Naive thymus-derived CD4-positive, alpha-beta T cell (primary cell): ENCODE measurements at regions of chr11 and their contacts with region 1.

Region 1: GRCh38 chr11:3880724-3881123 is 25.3 kb downstream of the STIM1 start:
- DNase-seq: no peak
- ATAC-seq: peak; percentile 38
- H3K4me3 ChIP-seq: no peak overlapping the region
- H3K4me3 Mint-ChIP-seq: peak overlapping the region in 9 of 10 donors; percentile 4 to 63 (median 41)
- H3K27ac ChIP-seq: peak overlapping the region; percentile 17
- H3K27ac Mint-ChIP-seq: peak overlapping the region; percentile 1 to 87 (median 68)
- H3K4me1 ChIP-seq: peaks cover 32 to 39% of the 10 kb centered on the region in 2 donors
- H3K4me1 Mint-ChIP-seq: peaks cover 59 to 90% (median 85%) of the 10 kb centered on the region in 7 donors
- H3K27me3 ChIP-seq: no peaks in the 10 kb centered on the region
- H3K27me3 Mint-ChIP-seq: no peaks in the 10 kb centered on the region

Region 2: GRCh38 chr11:2173150-2173693 is 1707.5 kb before region 1 on chr11:
- CTCF ChIA-PET with region 1: no interaction called
- POLR2A ChIA-PET with region 1: no interaction called
- intact Hi-C with region 1: no loop called
- DNase-seq: no peak
- ATAC-seq: no peak
- H3K4me3 ChIP-seq: no peak overlapping the region
- H3K4me3 Mint-ChIP-seq: no peak overlapping the region
- H3K27ac ChIP-seq: no peak overlapping the region
- H3K27ac Mint-ChIP-seq: no peak overlapping the region
- H3K4me1 ChIP-seq: no peaks in the 10 kb centered on the region
- H3K4me1 Mint-ChIP-seq: no peaks in the 10 kb centered on the region
- H3K27me3 ChIP-seq: no peaks in the 10 kb centered on the region
- H3K27me3 Mint-ChIP-seq: no peaks in the 10 kb centered on the region

Region 3: DNA sequence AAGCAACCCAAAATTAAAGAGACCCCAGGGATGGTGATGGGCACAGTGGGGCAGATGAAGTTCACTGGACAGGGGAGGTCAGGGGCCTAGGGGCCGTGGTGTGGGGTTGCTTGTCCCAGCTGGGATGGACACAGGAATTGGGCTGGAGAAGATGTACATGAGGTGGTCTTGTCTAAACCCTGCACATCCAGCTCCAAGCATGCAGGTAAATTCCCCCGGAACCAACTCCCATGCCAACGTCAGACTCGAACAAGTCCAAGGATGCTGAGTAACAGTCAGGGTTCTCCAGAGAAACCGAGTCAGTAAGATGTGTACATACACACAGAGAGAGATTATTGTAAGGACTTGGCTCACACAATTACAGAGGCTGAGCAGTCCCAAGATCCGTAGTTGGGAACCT is 1550.0 kb before region 1 on chr11:
- CTCF ChIA-PET with region 1: no interaction called
- POLR2A ChIA-PET with region 1: no interaction called
- intact Hi-C with region 1: no loop called
- DNase-seq: no peak
- ATAC-seq: no peak
- H3K4me3 ChIP-seq: no peak overlapping the region
- H3K4me3 Mint-ChIP-seq: no peak overlapping the region
- H3K27ac ChIP-seq: no peak overlapping the region
- H3K27ac Mint-ChIP-seq: no peak overlapping the region
- H3K4me1 ChIP-seq: no peaks in the 10 kb centered on the region
- H3K4me1 Mint-ChIP-seq: no peaks in the 10 kb centered on the region
- H3K27me3 ChIP-seq: no peaks in the 10 kb centered on the region
- H3K27me3 Mint-ChIP-seq: peaks cover 0 to 35% (median 13%) of the 10 kb centered on the region in 5 donors

Region 4: DNA sequence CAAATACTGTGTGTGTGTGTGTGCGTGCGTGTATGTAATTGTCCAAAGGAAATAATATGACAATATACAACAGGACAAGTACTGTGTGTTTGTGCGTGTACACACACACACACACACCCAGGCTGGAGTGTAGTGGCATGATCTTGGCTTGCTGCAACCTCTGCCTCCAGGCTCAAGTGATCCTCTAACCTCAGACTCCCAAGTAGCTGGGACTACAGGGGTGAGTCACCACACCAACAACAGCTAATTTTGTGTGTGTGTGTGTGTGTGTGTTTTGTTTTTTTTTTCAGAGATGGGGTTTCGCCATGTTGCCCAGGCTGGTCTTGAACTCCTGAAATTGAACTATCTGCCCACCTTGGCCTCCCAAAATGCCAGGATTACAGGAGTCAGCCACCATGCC is 144.9 kb before region 1 on chr11:
- CTCF ChIA-PET with region 1: no interaction called
- POLR2A ChIA-PET with region 1: no interaction called
- intact Hi-C with region 1: no loop called
- DNase-seq: no peak
- ATAC-seq: no peak
- H3K4me3 ChIP-seq: no peak overlapping the region
- H3K4me3 Mint-ChIP-seq: no peak overlapping the region
- H3K27ac ChIP-seq: no peak overlapping the region
- H3K27ac Mint-ChIP-seq: peak overlapping the region in 2 of 9 donors; percentile 8 to 59
- H3K4me1 ChIP-seq: no peaks in the 10 kb centered on the region
- H3K4me1 Mint-ChIP-seq: peaks cover 2 to 23% (median 16%) of the 10 kb centered on the region in 7 donors
- H3K27me3 ChIP-seq: no peaks in the 10 kb centered on the region
- H3K27me3 Mint-ChIP-seq: no peaks in the 10 kb centered on the region

Region 5: DNA sequence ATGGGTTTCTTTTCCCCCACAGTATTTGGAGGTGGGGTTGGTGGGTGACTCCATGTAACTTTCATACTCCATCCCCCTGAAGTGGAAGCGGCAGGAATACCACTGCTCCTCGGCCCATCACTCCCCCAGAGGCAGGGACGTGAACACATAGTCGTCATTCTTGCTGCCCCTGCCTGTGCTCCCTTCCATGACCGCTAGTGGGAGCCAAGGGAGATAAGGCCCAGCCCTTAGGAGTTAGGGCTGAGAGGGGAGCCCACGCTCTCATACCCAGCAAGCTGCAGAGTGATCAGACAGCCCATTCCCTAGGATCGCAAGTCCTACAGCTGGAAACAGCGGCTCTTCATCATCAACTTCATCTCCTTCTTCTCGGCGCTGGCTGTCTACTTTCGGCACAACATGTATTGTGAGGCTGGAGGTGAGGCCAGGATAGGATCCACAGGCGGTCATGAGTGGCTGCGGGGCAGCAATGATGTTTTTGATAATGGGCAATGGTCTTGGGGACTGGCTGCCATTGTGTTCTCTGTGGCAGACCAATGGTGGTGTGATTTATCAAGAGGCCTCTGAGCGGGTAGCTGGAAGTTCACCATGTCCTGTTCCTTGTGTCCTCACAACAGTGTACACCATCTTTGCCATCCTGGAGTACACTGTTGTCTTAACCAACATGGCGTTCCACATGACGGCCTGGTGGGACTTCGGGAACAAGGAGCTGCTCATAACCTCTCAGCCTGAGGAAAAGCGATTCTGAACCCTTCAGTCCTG is 55.8 kb before region 1 on chr11:
- CTCF ChIA-PET with region 1: interaction called, 3 read pairs
- POLR2A ChIA-PET with region 1: no interaction called
- intact Hi-C with region 1: loop called in 1 of 2 experiments (anchors 1 kb)
- DNase-seq: peak; percentile 65 to 83 (median 77)
- ATAC-seq: peak; percentile 97
- H3K4me3 ChIP-seq: no peak overlapping the region
- H3K4me3 Mint-ChIP-seq: no peak overlapping the region
- H3K27ac ChIP-seq: peak overlapping the region; percentile 38
- H3K27ac Mint-ChIP-seq: peak overlapping the region; percentile 60 to 96 (median 87)
- H3K4me1 ChIP-seq: peaks cover 13 to 14% of the 10 kb centered on the region in 2 donors
- H3K4me1 Mint-ChIP-seq: peaks cover 15 to 46% (median 44%) of the 10 kb centered on the region in 7 donors
- H3K27me3 ChIP-seq: no peaks in the 10 kb centered on the region
- H3K27me3 Mint-ChIP-seq: no peaks in the 10 kb centered on the region

Region 6: GRCh38 chr11:3849297-3849874 is 31.3 kb before region 1 on chr11:
- CTCF ChIA-PET with region 1: interaction called, 13 read pairs
- POLR2A ChIA-PET with region 1: interaction called, 9 read pairs
- intact Hi-C with region 1: loop called in 1 of 2 experiments (anchors 1 kb)
- DNase-seq: peak in 7 of 9 donors; percentile 45 to 72 (median 62)
- ATAC-seq: peak; percentile 82
- H3K4me3 ChIP-seq: no peak overlapping the region
- H3K4me3 Mint-ChIP-seq: no peak overlapping the region
- H3K27ac ChIP-seq: no peak overlapping the region
- H3K27ac Mint-ChIP-seq: peak overlapping the region in 8 of 9 donors; percentile 7 to 80 (median 62)
- H3K4me1 ChIP-seq: peaks cover 20 to 33% of the 10 kb centered on the region in 2 donors
- H3K4me1 Mint-ChIP-seq: peaks cover 28 to 61% (median 42%) of the 10 kb centered on the region in 7 donors
- H3K27me3 ChIP-seq: no peaks in the 10 kb centered on the region
- H3K27me3 Mint-ChIP-seq: no peaks in the 10 kb centered on the region

Region 7: GRCh38 chr11:3861683-3862082 is 19.0 kb before region 1 on chr11:
- CTCF ChIA-PET with region 1: interaction called, 4 read pairs
- POLR2A ChIA-PET with region 1: interaction called, 8 read pairs
- intact Hi-C with region 1: loop called (anchors 2 kb)
- DNase-seq: no peak
- ATAC-seq: no peak
- H3K4me3 ChIP-seq: peak overlapping the region; percentile 32
- H3K4me3 Mint-ChIP-seq: peak overlapping the region; percentile 79 to 98 (median 87)
- H3K27ac ChIP-seq: peak overlapping the region; percentile 22
- H3K27ac Mint-ChIP-seq: peak overlapping the region; percentile 62 to 88 (median 87)
- H3K4me1 ChIP-seq: peaks cover 70 to 78% of the 10 kb centered on the region in 2 donors
- H3K4me1 Mint-ChIP-seq: peaks cover 78 to 95% (median 88%) of the 10 kb centered on the region in 7 donors
- H3K27me3 ChIP-seq: no peaks in the 10 kb centered on the region
- H3K27me3 Mint-ChIP-seq: no peaks in the 10 kb centered on the region

Region 8: DNA sequence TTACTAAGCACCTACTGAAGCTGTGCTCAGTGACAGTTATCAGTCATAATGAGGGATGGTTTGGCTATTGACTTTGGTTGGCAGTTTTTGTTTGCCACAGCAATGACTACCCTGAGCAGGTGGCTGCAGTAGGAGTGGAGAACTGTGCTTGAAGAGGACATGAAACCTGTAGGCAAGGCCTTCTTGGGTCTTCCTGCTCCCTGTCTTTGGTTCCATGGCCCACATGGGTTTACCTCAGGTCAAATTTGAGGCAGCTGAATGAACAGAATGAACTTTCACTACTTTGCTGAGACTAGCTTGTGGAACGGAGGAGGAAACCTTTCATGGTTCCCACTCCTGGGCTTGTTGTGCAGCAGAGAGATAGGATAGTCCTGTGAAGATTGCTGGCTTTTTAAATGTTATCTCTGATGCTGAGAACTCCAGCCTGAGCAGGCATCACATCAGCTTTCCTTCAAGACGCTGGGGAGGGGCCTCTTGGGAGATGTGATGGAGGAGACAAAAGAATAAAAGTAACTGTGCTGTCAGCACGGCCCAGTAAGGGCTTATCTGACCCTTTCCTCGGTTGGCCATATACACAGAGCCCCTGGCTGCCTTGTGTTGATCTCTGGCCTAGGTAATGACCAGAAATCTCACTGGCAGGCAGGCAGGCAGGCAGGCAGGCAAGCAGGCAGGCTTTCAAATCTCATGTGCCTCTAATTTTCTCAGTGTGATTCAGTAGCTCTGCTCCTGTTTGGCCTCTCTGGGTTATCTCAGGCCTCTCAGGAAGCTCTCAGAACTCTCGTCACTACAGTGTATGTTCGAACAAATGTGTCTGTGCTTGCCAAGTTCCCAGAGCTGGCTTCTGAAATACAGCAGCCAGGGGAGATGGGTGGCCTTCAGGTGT is 13.3 kb before region 1 on chr11:
- CTCF ChIA-PET with region 1: interaction called, 7 read pairs
- POLR2A ChIA-PET with region 1: interaction called, 5 read pairs
- intact Hi-C with region 1: loop called in 1 of 2 experiments (anchors 1 kb)
- DNase-seq: peak in 1 of 9 donors; percentile 41
- ATAC-seq: peak; percentile 30
- H3K4me3 ChIP-seq: no peak overlapping the region
- H3K4me3 Mint-ChIP-seq: peak overlapping the region; percentile 57 to 84 (median 72)
- H3K27ac ChIP-seq: peak overlapping the region; percentile 63
- H3K27ac Mint-ChIP-seq: peak overlapping the region; percentile 75 to 95 (median 86)
- H3K4me1 ChIP-seq: peaks cover 42 to 67% of the 10 kb centered on the region in 2 donors
- H3K4me1 Mint-ChIP-seq: peaks cover 69 to 95% (median 87%) of the 10 kb centered on the region in 7 donors
- H3K27me3 ChIP-seq: no peaks in the 10 kb centered on the region
- H3K27me3 Mint-ChIP-seq: no peaks in the 10 kb centered on the region